Calu3 (cell line): ENCODE measurements at regions of chr3 and their contacts with region 1.

Region 1: GRCh38 chr3:149494022-149494758 is 19.7 kb downstream of the TM4SF4 start:
- DNase-seq: peak; percentile 85
- H3K4me3 Mint-ChIP-seq: no peak overlapping the region
- H3K27ac Mint-ChIP-seq: peak overlapping the region; percentile 31
- H3K4me1 Mint-ChIP-seq: peaks cover 9% of the 10 kb centered on the region
- H3K27me3 Mint-ChIP-seq: no peaks in the 10 kb centered on the region
- CTCF ChIP-seq: peak; percentile 98

Region 2: DNA sequence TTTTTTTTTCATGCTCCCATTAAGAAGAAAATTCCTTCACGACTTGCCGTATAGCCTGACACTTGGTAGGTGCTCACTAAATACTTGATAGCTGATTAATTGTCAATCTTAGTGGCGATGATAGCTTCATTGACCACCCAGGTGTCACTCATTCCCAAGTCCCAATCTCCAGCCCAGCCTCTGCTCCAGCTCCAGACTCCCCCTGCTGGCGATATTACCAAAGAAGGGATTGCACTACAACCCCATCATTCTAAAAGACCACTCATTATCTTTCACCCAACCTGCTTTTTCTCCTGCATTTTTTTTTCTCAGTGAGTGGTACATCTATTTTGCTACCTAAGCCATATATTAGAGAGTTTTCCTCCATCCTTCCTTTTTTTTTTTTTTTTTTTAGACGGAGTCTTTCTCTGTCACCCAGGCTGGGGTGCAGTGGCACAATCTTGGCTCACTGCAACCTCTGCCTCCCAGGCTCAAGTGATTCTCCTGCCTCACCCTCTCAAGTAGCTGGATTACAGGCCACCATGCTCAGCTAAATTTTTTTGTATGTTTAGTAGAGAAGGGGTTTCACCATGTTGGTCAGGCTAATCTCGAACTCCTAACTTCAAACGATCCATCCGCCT is 277.6 kb after region 1 on chr3:
- CTCF ChIA-PET with region 1: interaction called, 6 read pairs
- intact Hi-C with region 1: loop called (anchors 1 kb)
- DNase-seq: peak; percentile 87
- H3K4me3 Mint-ChIP-seq: no peak overlapping the region
- H3K27ac Mint-ChIP-seq: no peak overlapping the region
- H3K4me1 Mint-ChIP-seq: no peaks in the 10 kb centered on the region
- H3K27me3 Mint-ChIP-seq: no peaks in the 10 kb centered on the region
- CTCF ChIP-seq: peak; percentile 95